OCI-LY7 (cell line): ENCODE measurements at regions of chr13 and their contacts with region 1.

Region 1: DNA sequence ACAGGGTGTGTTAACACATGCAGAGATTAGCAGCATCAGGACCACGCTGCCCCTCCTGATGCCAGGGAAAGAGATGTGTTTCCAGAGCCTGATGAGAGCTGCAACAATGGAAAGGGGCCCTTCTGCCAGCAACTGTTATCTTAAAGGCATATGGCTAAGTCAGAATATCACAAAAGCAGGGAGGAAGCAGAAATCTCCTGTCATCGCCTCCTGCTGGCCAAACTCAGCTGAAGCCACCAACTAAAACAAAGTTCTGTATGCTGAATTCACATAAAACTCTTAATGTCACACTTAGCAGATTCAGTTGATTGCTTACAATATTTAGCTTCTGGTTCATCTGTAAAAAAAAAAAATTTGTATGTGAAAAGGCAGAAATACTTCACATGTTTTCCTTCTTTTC is 178.2 kb downstream of the GPC5 start:
- DNase-seq: peak; percentile 53
- H3K4me3 ChIP-seq: no peak overlapping the region
- H3K27ac ChIP-seq: no peak overlapping the region
- H3K4me1 ChIP-seq: no peaks in the 10 kb centered on the region
- CTCF ChIP-seq: no peak

Region 2: GRCh38 chr13:91375116-91375729 is 201.4 kb before region 1 on chr13:
- CTCF ChIA-PET with region 1: no interaction called
- POLR2A ChIA-PET with region 1: no interaction called
- intact Hi-C with region 1: loop called (anchors 5 kb)
- DNase-seq: peak; percentile 85
- H3K4me3 ChIP-seq: no peak overlapping the region
- H3K27ac ChIP-seq: no peak overlapping the region
- H3K4me1 ChIP-seq: no peaks in the 10 kb centered on the region
- CTCF ChIP-seq: no peak

Region 3: GRCh38 chr13:91491984-91492383 is 84.6 kb before region 1 on chr13:
- CTCF ChIA-PET with region 1: no interaction called
- POLR2A ChIA-PET with region 1: no interaction called
- intact Hi-C with region 1: no loop called
- DNase-seq: no peak
- H3K4me3 ChIP-seq: no peak overlapping the region
- H3K27ac ChIP-seq: no peak overlapping the region
- H3K4me1 ChIP-seq: no peaks in the 10 kb centered on the region
- CTCF ChIP-seq: no peak

Region 4: DNA sequence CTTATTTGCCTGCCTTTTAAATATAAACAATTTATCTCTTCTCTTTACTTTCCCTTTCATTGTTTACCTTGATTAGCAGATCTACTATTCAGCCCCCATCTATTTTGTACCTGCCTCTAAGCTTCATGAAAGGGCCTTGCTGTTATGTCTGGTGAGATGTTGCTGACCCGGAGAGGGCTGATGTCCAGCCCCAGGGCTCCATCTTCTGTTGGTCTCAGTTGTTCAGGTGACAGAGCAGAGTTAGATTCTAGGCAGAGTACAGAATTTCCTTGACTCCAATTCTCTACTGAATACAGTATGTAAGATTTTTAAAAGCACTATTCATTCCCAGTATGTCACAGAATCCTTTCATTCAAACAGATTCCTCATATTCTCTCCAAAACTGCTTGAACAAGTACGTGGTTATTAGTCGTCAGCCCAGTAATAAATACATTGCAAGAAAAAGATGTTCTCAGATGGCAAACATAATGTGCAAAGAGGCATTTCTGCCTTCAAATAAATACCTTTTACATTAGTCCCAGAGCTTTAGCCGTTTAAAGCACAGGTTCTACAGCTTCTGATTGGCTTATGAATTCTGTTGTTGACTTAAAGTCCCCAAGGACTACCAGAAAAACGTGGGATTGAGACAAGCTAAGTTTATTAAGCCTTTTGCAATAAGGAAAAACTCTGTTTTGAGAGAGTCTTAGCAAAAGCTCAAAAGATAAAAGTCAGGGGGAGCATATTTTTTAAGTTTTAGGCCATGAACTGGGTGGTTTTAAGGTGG is 19.1 kb before region 1 on chr13:
- CTCF ChIA-PET with region 1: no interaction called
- POLR2A ChIA-PET with region 1: interaction called, 11 read pairs
- intact Hi-C with region 1: no loop called
- DNase-seq: no peak
- H3K4me3 ChIP-seq: no peak overlapping the region
- H3K27ac ChIP-seq: no peak overlapping the region
- H3K4me1 ChIP-seq: no peaks in the 10 kb centered on the region
- CTCF ChIP-seq: no peak

Region 5: DNA sequence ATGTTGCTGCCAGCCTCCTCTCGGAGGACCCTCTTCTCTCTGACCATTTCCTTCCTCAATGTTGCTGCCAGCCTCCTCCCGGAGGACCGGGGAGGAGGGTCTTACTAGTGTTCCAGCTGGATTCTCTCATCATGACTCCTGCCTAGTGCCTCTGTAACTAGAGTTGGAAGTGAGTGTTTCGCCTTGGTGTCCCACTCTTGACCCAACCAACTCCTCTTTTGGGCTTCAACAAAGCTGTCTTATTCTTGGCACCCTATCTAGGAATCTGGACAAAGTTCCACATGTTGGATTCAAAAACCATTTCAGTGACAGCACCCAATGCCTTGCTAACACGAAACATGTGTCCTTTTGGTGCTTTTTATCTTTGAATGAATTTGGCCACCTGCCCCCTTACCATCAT is 12.8 kb before region 1 on chr13:
- CTCF ChIA-PET with region 1: no interaction called
- POLR2A ChIA-PET with region 1: interaction called, 17 read pairs
- intact Hi-C with region 1: no loop called
- DNase-seq: no peak
- H3K4me3 ChIP-seq: no peak overlapping the region
- H3K27ac ChIP-seq: no peak overlapping the region
- H3K4me1 ChIP-seq: no peaks in the 10 kb centered on the region
- CTCF ChIP-seq: no peak